ENCODE measurements at regions of chr15 and their contacts with region 1.

Region 1: DNA sequence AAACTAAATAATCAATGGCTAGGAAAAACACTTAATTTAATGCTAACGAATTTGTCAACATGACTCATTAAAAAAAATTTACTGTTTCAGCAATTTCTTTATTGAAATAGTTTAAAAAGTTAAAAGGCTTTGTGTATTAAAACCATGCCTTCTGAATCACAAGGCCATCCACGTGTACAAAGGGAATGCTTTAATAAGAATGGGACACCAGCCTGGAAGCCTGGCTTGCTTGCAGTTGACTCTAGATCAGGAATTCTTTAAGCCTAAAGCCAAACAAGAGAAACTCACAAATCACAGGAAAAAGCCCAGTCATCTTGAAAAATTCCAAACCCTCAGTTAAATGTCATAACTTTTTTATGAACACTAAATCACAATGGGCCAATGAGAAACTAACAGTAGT is 137.6 kb downstream of the PEAK1 start:
- DNase-seq: no peak
- H3K4me3 ChIP-seq: no peak overlapping the region
- H3K27ac ChIP-seq: no peak overlapping the region
- H3K4me1 ChIP-seq: peaks cover 9% of the 10 kb centered on the region
- H3K27me3 ChIP-seq: no peaks in the 10 kb centered on the region
- CTCF ChIP-seq: no peak

Region 2: GRCh38 chr15:77094397-77095030 is 187.8 kb before region 1 on chr15:
- CTCF ChIA-PET with region 1: no interaction called
- POLR2A ChIA-PET with region 1: interaction called, 13 read pairs
- intact Hi-C with region 1: no loop called
- DNase-seq: peak; percentile 45
- H3K4me3 ChIP-seq: no peak overlapping the region
- H3K27ac ChIP-seq: no peak overlapping the region
- H3K4me1 ChIP-seq: peaks cover 6% of the 10 kb centered on the region
- H3K27me3 ChIP-seq: no peaks in the 10 kb centered on the region
- CTCF ChIP-seq: peak; percentile 61

Region 3: DNA sequence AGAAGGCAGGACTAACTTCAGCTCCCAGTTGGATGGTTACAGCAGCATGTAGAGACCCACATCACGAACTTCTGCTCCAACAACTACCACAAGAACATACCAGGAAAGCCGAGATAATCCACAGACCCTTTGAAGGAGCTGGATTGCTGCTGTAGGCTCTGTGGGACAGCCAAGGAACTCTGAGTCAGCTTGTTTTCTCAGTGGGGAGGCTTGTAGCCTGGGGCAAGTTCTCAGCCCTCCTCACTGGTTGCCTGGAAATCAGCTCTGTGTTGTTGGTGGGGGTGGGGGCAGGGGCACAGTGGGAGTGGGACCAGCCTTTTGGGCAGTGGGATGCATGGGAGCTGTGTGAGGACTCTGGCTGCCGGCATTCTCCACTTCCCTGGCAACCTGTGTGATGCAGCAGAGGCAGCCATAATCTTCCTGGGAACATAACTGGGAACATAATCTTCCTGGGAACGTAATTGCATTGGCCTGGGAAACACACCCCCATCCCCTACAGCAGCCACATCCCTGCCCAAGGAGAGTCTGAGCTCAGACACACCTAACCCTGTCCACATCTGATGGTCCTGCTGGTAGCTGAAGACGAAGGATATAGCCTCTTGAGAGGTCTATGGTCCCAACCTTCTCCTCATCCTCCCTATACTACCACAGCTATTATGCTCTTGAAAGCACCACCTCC is 15.5 kb before region 1 on chr15:
- CTCF ChIA-PET with region 1: no interaction called
- POLR2A ChIA-PET with region 1: no interaction called
- intact Hi-C with region 1: no loop called
- DNase-seq: peak; percentile 70
- H3K4me3 ChIP-seq: no peak overlapping the region
- H3K27ac ChIP-seq: no peak overlapping the region
- H3K4me1 ChIP-seq: no peaks in the 10 kb centered on the region
- H3K27me3 ChIP-seq: no peaks in the 10 kb centered on the region
- CTCF ChIP-seq: no peak